ENCODE measurements at regions of chr2 and their contacts with region 1.

Region 1: DNA sequence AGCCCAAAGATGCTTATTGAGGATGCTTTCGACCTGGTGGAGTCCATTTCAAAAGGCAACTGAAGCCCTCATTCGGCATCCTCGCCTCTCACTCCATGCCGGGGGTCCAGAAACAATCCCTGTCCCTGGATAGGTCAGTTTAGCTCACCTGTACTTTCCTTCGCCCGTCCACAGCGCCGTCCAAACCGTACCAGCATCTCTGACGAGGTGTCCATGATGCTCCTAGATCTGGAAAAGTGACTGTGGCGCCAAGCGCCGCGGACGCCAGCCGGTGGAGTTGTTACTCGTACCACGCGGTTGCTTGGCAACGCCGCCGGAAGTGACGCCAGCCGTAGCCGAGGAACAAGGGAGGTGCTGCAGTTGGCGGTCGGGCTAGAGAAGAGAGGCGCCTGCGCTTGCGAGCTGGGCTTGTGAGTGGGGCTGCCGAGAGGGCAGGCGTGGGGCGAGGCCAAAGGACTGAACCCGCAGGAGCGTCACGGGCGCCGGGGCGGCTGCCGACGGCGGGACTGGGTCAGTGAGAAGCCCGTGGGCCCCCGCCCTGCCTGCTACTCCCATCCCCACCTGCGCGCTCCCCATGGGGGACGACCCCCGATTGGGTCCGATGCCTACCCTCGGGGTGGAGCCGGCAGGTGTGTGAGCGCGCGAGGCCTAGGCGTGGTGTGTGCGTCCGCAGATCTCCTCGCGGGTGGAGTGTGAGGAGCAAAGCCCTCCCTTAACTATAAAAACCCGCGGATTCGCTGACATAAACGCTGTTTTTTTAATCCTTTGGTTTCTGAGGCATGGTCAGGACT is at the starts of genes CFAP210 and PHOSPHO2:
- DNase-seq: peak; percentile 98 to 100 (median 99)
- ATAC-seq: peak; percentile 89
- H3K4me3 ChIP-seq: peak within 1 kb of the TSS; percentile 49 to 69
- H3K4me3 Mint-ChIP-seq: peak within 1 kb of the TSS; percentile 95
- H3K27ac ChIP-seq: peak within 1 kb of the TSS; percentile 86 to 93
- H3K27ac Mint-ChIP-seq: peak within 1 kb of the TSS; percentile 99
- H3K4me1 ChIP-seq: peaks cover 11% of the 10 kb centered on the region
- H3K4me1 Mint-ChIP-seq: peaks cover 19% of the 10 kb centered on the region
- H3K27me3 ChIP-seq: no peaks in the 10 kb centered on the region
- H3K27me3 Mint-ChIP-seq: peaks cover 2% of the 10 kb centered on the region
- CTCF ChIP-seq: no peak
- total RNA-seq, gene CFAP210: 0.95 to 1.4 TPM
- total RNA-seq, gene PHOSPHO2: 2.3 TPM

Region 2: GRCh38 chr2:169066895-169067294 is 627.4 kb before region 1 on chr2:
- CTCF ChIA-PET with region 1: no interaction called
- POLR2A ChIA-PET with region 1: no interaction called
- intact Hi-C with region 1: no loop called
- DNase-seq: no peak
- ATAC-seq: no peak
- H3K4me3 ChIP-seq: no peak overlapping the region
- H3K4me3 Mint-ChIP-seq: no peak overlapping the region
- H3K27ac ChIP-seq: no peak overlapping the region
- H3K27ac Mint-ChIP-seq: no peak overlapping the region
- H3K4me1 ChIP-seq: no peaks in the 10 kb centered on the region
- H3K4me1 Mint-ChIP-seq: no peaks in the 10 kb centered on the region
- H3K27me3 ChIP-seq: no peaks in the 10 kb centered on the region
- H3K27me3 Mint-ChIP-seq: no peaks in the 10 kb centered on the region
- CTCF ChIP-seq: no peak

Region 3: GRCh38 chr2:169584005-169584877 is 110.1 kb before region 1 on chr2 and contains the start of gene PPIG:
- CTCF ChIA-PET with region 1: no interaction called
- POLR2A ChIA-PET with region 1: interaction called, 6 read pairs
- intact Hi-C with region 1: loop called (anchors 1 kb)
- DNase-seq: peak; percentile 74 to 97 (median 88)
- ATAC-seq: peak; percentile 91
- H3K4me3 ChIP-seq: peak within 1 kb of the TSS; percentile 85 to 100
- H3K4me3 Mint-ChIP-seq: peak within 1 kb of the TSS; percentile 97
- H3K27ac ChIP-seq: peak within 1 kb of the TSS; percentile 97 to 98
- H3K27ac Mint-ChIP-seq: peak within 1 kb of the TSS; percentile 100
- H3K4me1 ChIP-seq: peaks cover 25% of the 10 kb centered on the region
- H3K4me1 Mint-ChIP-seq: peaks cover 39% of the 10 kb centered on the region
- H3K27me3 ChIP-seq: no peaks in the 10 kb centered on the region
- H3K27me3 Mint-ChIP-seq: no peaks in the 10 kb centered on the region
- CTCF ChIP-seq: no peak
- total RNA-seq, gene PPIG: 89.8 to 104 TPM

Region 4: DNA sequence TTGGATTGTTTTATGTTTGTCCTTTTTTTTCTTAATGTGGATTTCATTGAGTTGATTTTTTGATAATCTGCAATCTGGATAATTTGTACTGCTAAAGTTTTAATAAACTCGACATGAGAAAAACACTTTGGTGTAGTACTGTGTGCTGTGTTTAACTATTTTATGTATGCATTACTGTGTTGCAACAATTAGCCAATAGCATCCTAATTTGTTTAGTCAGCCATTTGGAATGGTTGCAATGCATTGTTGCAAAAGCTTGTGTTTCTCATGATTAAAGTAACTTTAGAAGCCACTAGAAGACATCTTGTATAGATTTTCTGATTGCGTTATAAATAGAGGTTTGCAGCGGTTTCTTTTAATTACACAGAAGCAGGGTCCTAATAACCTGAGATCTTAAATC is 56.7 kb before region 1 on chr2:
- CTCF ChIA-PET with region 1: no interaction called
- POLR2A ChIA-PET with region 1: no interaction called
- intact Hi-C with region 1: loop called in 1 of 2 experiments (anchors 5 kb)
- DNase-seq: no peak
- ATAC-seq: no peak
- H3K4me3 ChIP-seq: no peak overlapping the region
- H3K4me3 Mint-ChIP-seq: no peak overlapping the region
- H3K27ac ChIP-seq: no peak overlapping the region
- H3K27ac Mint-ChIP-seq: no peak overlapping the region
- H3K4me1 ChIP-seq: no peaks in the 10 kb centered on the region
- H3K4me1 Mint-ChIP-seq: no peaks in the 10 kb centered on the region
- H3K27me3 ChIP-seq: no peaks in the 10 kb centered on the region
- H3K27me3 Mint-ChIP-seq: no peaks in the 10 kb centered on the region
- CTCF ChIP-seq: no peak

Region 5: GRCh38 chr2:169734169-169734847 is 40.0 kb after region 1 on chr2:
- CTCF ChIA-PET with region 1: no interaction called
- POLR2A ChIA-PET with region 1: no interaction called
- intact Hi-C with region 1: loop called in 1 of 2 experiments (anchors 5 kb)
- DNase-seq: peak in 2 of 9 experiments; percentile 25
- ATAC-seq: peak; percentile 23
- H3K4me3 ChIP-seq: peak overlapping the region; percentile 36 to 37
- H3K4me3 Mint-ChIP-seq: peak overlapping the region; percentile 76
- H3K27ac ChIP-seq: no peak overlapping the region
- H3K27ac Mint-ChIP-seq: no peak overlapping the region
- H3K4me1 ChIP-seq: peaks cover 13% of the 10 kb centered on the region
- H3K4me1 Mint-ChIP-seq: peaks cover 19% of the 10 kb centered on the region
- H3K27me3 ChIP-seq: peaks cover 0 to 5% of the 10 kb centered on the region in 2 experiments
- H3K27me3 Mint-ChIP-seq: peaks cover 17% of the 10 kb centered on the region
- CTCF ChIP-seq: no peak

Region 6: GRCh38 chr2:169824373-169825333 is 130.3 kb after region 1 on chr2 and contains the start of gene METTL5:
- CTCF ChIA-PET with region 1: interaction called, 3 read pairs
- POLR2A ChIA-PET with region 1: interaction called, 4 read pairs
- intact Hi-C with region 1: loop called (anchors 1 to 2 kb)
- DNase-seq: peak; percentile 55 to 87 (median 73)
- ATAC-seq: peak; percentile 61
- H3K4me3 ChIP-seq: peak within 1 kb of the TSS; percentile 87
- H3K4me3 Mint-ChIP-seq: peak within 1 kb of the TSS; percentile 95
- H3K27ac ChIP-seq: peak within 1 kb of the TSS; percentile 59 to 72
- H3K27ac Mint-ChIP-seq: peak within 1 kb of the TSS; percentile 92
- H3K4me1 ChIP-seq: peaks cover 37% of the 10 kb centered on the region
- H3K4me1 Mint-ChIP-seq: peaks cover 61% of the 10 kb centered on the region
- H3K27me3 ChIP-seq: no peaks in the 10 kb centered on the region
- H3K27me3 Mint-ChIP-seq: no peaks in the 10 kb centered on the region
- CTCF ChIP-seq: peak; percentile 93
- total RNA-seq, gene METTL5: 13.7 to 15.8 TPM

Region 7: GRCh38 chr2:169891593-169892298 is 197.4 kb after region 1 on chr2:
- CTCF ChIA-PET with region 1: no interaction called
- POLR2A ChIA-PET with region 1: no interaction called
- intact Hi-C with region 1: no loop called
- DNase-seq: no peak
- ATAC-seq: no peak
- H3K4me3 ChIP-seq: no peak overlapping the region
- H3K4me3 Mint-ChIP-seq: no peak overlapping the region
- H3K27ac ChIP-seq: no peak overlapping the region
- H3K27ac Mint-ChIP-seq: no peak overlapping the region
- H3K4me1 ChIP-seq: no peaks in the 10 kb centered on the region
- H3K4me1 Mint-ChIP-seq: no peaks in the 10 kb centered on the region
- H3K27me3 ChIP-seq: no peaks in the 10 kb centered on the region
- H3K27me3 Mint-ChIP-seq: no peaks in the 10 kb centered on the region
- CTCF ChIP-seq: no peak

Region 8: GRCh38 chr2:170052151-170052550 is 357.8 kb after region 1 on chr2:
- CTCF ChIA-PET with region 1: no interaction called
- POLR2A ChIA-PET with region 1: no interaction called
- intact Hi-C with region 1: no loop called
- DNase-seq: no peak
- ATAC-seq: no peak
- H3K4me3 ChIP-seq: no peak overlapping the region
- H3K4me3 Mint-ChIP-seq: no peak overlapping the region
- H3K27ac ChIP-seq: no peak overlapping the region
- H3K27ac Mint-ChIP-seq: no peak overlapping the region
- H3K4me1 ChIP-seq: no peaks in the 10 kb centered on the region
- H3K4me1 Mint-ChIP-seq: no peaks in the 10 kb centered on the region
- H3K27me3 ChIP-seq: no peaks in the 10 kb centered on the region
- H3K27me3 Mint-ChIP-seq: no peaks in the 10 kb centered on the region
- CTCF ChIP-seq: no peak

Region 9: DNA sequence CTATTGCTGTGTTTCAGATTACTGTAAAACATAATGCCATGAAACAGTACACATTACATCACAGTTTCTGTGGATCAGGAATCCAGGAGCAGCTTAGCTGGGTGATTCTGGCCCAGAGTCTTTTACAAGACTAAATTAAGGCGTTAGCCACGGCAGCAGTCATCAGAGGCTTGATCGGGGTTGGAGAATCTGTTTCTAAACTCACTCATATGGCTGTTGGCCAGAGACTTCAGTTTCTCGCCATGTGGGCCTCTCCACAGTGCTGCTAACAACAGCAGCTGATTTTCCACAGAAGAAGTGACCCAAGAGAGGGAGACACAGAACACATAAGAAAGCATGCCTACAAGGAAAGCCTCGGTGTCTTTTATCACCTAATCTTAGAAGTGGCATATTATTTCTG is 394.5 kb after region 1 on chr2:
- CTCF ChIA-PET with region 1: no interaction called
- POLR2A ChIA-PET with region 1: no interaction called
- intact Hi-C with region 1: no loop called
- DNase-seq: no peak
- ATAC-seq: no peak
- H3K4me3 ChIP-seq: no peak overlapping the region
- H3K4me3 Mint-ChIP-seq: no peak overlapping the region
- H3K27ac ChIP-seq: no peak overlapping the region
- H3K27ac Mint-ChIP-seq: no peak overlapping the region
- H3K4me1 ChIP-seq: no peaks in the 10 kb centered on the region
- H3K4me1 Mint-ChIP-seq: no peaks in the 10 kb centered on the region
- H3K27me3 ChIP-seq: no peaks in the 10 kb centered on the region
- H3K27me3 Mint-ChIP-seq: no peaks in the 10 kb centered on the region
- CTCF ChIP-seq: no peak

Measured in CD8-positive, alpha-beta T cell (primary cell).